ENCODE measurements at regions of chr16 and their contacts with region 1.

Region 1: GRCh38 chr16:1413684-1414531 is 596 bp downstream of the UNKL start:
- DNase-seq: peak; percentile 52
- ATAC-seq: peak; percentile 77
- H3K4me3 ChIP-seq: peak overlapping the region; percentile 82 to 85
- H3K27ac ChIP-seq: peak overlapping the region; percentile 95; the same call in 1 of the 2 replicates
- H3K4me1 ChIP-seq: peaks cover 8 to 31% of the 10 kb centered on the region in 2 experiments
- H3K27me3 ChIP-seq: no peaks in the 10 kb centered on the region
- CTCF ChIP-seq: peak; percentile 68 to 75 (median 69)
- POLR2A ChIP-seq: no peak
- RAD21 ChIP-seq: peak; percentile 78

Region 2: GRCh38 chr16:265711-266110 is 1148.2 kb before region 1 on chr16:
- CTCF ChIA-PET with region 1: no interaction called
- POLR2A ChIA-PET with region 1: no interaction called
- RAD21 ChIA-PET with region 1: no interaction called
- intact Hi-C with region 1: no loop called
- DNase-seq: no peak
- ATAC-seq: no peak
- H3K4me3 ChIP-seq: no peak overlapping the region
- H3K27ac ChIP-seq: no peak overlapping the region
- H3K4me1 ChIP-seq: no peaks in the 10 kb centered on the region
- H3K27me3 ChIP-seq: no peaks in the 10 kb centered on the region
- CTCF ChIP-seq: no peak
- POLR2A ChIP-seq: no peak
- RAD21 ChIP-seq: no peak

Region 3: DNA sequence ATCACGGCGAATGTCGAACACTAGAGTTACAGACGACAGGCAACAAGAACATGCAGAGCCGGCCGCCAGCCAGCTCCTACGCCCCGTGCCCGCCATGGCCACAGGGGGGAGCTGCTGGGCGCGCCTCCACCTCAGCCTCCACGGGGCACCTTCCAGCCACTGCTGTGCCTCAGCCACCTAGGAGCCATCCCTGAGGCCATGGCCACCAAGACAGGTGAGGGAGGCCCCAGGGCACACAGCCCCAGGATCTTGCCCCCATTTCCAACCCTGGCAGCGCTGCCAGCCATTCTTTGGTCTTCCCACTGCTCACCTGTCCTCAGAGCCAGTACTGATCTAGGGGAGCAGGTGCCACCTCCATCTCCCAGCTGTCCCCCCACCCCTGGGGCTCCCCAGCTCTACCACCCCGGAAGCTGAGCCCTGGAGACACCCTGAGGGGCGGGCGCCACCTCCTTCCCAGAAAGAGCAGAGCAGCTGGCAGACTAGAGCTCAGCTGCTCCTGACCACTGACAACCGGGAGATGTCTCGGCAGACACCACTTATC is 50.3 kb before region 1 on chr16:
- CTCF ChIA-PET with region 1: interaction called, 5 read pairs
- POLR2A ChIA-PET with region 1: no interaction called
- RAD21 ChIA-PET with region 1: no interaction called
- intact Hi-C with region 1: loop called (anchors 10 kb)
- DNase-seq: peak; percentile 23
- ATAC-seq: peak; percentile 96
- H3K4me3 ChIP-seq: no peak overlapping the region
- H3K27ac ChIP-seq: no peak overlapping the region
- H3K4me1 ChIP-seq: peaks cover 4 to 15% of the 10 kb centered on the region in 2 experiments
- H3K27me3 ChIP-seq: no peaks in the 10 kb centered on the region
- CTCF ChIP-seq: peak; percentile 70 to 93 (median 88)
- POLR2A ChIP-seq: no peak
- RAD21 ChIP-seq: peak; percentile 74

Region 4: DNA sequence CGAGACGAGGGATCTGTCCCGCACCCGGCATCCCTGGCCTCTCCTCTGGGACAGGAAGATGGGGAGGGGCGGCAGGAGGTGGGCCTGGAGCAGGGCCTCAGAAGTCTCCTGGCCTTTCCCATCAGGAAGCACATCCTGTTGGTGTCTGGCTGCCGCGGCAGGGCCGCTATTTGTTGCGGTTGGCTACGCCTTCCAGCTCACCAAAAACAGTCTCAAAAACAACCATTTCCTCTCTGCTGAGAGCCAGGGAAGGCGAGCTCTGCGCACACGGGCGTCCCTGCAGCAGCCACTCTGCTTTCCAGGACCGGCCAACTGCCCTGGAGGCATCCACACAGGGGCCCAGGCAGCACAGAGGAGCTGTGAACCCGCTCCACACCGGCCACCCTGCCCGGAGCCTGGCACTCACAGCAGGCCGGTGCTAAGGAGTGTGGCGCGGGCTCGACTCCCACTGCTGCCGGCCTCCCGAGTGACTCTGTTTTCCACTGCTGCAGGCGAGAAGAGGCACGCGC is 119.6 kb after region 1 on chr16 and contains the start of gene TMEM204:
- CTCF ChIA-PET with region 1: no interaction called
- POLR2A ChIA-PET with region 1: no interaction called
- RAD21 ChIA-PET with region 1: no interaction called
- intact Hi-C with region 1: no loop called
- DNase-seq: no peak
- ATAC-seq: no peak
- H3K4me3 ChIP-seq: no peak within 1 kb of the TSS
- H3K27ac ChIP-seq: no peak within 1 kb of the TSS
- H3K4me1 ChIP-seq: no peaks in the 10 kb centered on the region
- H3K27me3 ChIP-seq: no peaks in the 10 kb centered on the region
- CTCF ChIP-seq: no peak
- POLR2A ChIP-seq: no peak
- RAD21 ChIP-seq: no peak
- total RNA-seq, gene TMEM204: 0.22 TPM

Region 5: GRCh38 chr16:1610276-1611017 is 196.5 kb after region 1 on chr16:
- CTCF ChIA-PET with region 1: no interaction called
- POLR2A ChIA-PET with region 1: no interaction called
- RAD21 ChIA-PET with region 1: no interaction called
- intact Hi-C with region 1: loop called (anchors 5 kb)
- DNase-seq: peak; percentile 70
- ATAC-seq: peak; percentile 74
- H3K4me3 ChIP-seq: peak overlapping the region; percentile 73
- H3K27ac ChIP-seq: peak overlapping the region; percentile 71
- H3K4me1 ChIP-seq: peaks cover 7 to 35% of the 10 kb centered on the region in 2 experiments
- H3K27me3 ChIP-seq: no peaks in the 10 kb centered on the region
- CTCF ChIP-seq: no peak
- POLR2A ChIP-seq: no peak
- RAD21 ChIP-seq: no peak

Measured in HCT116 (cell line).